ENCODE measurements at regions of chr19 and their contacts with region 1.

Region 1: DNA sequence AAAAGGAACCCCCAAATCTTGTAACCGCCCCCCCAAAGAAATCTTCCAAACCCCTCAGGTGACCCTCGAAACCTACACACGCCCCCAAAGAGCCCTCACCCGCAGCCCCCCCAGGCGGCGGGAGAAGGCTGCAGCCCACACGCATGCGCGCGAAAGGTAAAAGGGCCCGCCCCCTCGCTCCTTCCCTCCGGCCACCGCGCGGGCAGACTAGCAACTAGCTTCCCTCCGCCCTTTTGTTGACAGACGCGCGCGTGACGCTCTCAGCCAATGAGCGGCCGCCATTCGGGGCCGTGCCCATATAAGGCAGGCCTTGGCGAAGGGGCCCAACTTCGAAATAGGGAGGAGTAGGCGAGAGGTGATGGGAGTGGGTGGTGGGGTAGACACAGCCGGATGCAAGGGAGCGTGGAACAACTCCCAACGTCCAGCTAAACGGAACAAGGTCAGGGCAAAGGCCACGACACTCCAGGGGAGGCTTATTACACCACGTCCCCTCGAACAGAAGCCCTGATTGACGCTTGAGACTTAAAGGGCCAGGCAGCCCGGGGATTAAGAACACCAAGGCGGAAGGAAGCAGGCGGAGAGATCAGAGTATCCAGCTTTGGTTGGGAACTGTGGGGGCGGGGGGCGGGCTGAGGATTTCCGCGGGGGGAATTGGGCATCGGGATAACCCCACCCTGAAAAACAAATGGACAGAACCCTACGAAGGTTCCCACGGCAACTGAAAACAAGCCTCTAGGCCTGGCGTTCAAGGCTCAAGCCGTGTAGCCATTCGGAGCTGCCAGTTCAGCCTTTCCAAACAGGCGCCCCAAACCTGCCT is 13.3 kb downstream of the FBXO46 start:
- DNase-seq: peak; percentile 99
- H3K4me3 Mint-ChIP-seq: peak overlapping the region; percentile 88
- H3K27ac Mint-ChIP-seq: peak overlapping the region; percentile 97
- H3K4me1 Mint-ChIP-seq: peaks cover 33% of the 10 kb centered on the region
- H3K27me3 Mint-ChIP-seq: peaks cover 2% of the 10 kb centered on the region

Region 2: GRCh38 chr19:45730389-45731288 is 13.3 kb after region 1 on chr19 and contains the start of gene FBXO46:
- intact Hi-C with region 1: loop called (anchors 1 kb)
- DNase-seq: peak; percentile 99
- H3K4me3 Mint-ChIP-seq: peak within 1 kb of the TSS; percentile 95
- H3K27ac Mint-ChIP-seq: peak within 1 kb of the TSS; percentile 88
- H3K4me1 Mint-ChIP-seq: peaks cover 25% of the 10 kb centered on the region
- H3K27me3 Mint-ChIP-seq: no peaks in the 10 kb centered on the region
- total RNA-seq, gene FBXO46: 34.2 and 34.7 TPM in 2 replicates

Region 3: GRCh38 chr19:45952686-45953505 is 235.5 kb after region 1 on chr19:
- intact Hi-C with region 1: no loop called
- DNase-seq: peak; percentile 88
- H3K4me3 Mint-ChIP-seq: peak overlapping the region; percentile 80
- H3K27ac Mint-ChIP-seq: no peak overlapping the region
- H3K4me1 Mint-ChIP-seq: peaks cover 16% of the 10 kb centered on the region
- H3K27me3 Mint-ChIP-seq: peaks cover 11% of the 10 kb centered on the region